SK-N-SH (cell line): ENCODE measurements at regions of chr9 and their contacts with region 1.

Region 1: DNA sequence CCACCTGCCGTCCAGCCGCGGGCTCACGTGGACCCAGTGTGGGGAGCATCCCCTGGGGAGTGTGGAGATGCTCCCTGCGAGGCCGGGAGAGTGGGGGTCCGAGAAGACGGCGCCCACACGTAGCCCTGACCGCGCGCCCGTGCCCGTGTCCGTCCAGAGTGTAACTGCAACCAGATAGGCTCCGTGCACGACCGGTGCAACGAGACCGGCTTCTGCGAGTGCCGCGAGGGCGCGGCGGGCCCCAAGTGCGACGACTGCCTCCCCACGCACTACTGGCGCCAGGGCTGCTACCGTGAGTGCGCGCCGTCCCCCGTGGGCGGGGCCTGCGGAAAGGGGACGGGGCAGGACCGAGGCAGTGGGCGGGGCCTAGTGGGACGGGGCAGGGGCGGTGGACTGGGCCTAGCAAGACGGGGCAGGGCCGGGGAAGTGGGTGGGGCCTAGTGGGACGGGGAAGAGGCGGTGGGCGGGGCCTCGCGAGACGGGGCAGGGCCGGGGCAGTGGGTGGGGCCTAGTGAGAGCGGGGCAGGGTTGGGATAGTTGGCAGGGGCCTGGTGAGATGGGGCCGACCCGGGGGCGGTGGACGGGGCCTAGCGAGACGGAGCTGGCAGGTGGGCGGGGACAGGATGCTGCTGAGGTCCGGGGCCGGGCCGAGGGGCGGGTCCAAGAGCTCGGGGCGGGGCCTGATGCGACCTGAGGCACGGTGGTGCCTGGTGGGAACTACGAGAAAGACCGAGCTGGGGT is 79.1 kb downstream of the NTNG2 start:
- DNase-seq: peak; percentile 99
- H3K4me3 ChIP-seq: peak overlapping the region; percentile 55 to 64
- H3K27ac ChIP-seq: peak overlapping the region in 1 of 2 experiments; percentile 65; a peak in 2 of 4 replicates
- H3K4me1 ChIP-seq: peaks cover 0 to 28% of the 10 kb centered on the region in 2 experiments; a peak in 1 of 4 replicates
- H3K27me3 ChIP-seq: no peaks in the 10 kb centered on the region
- CTCF ChIP-seq: no peak
- EP300 ChIP-seq: no peak
- RAD21 ChIP-seq: no peak

Region 2: GRCh38 chr9:131762356-131762932 is 478.5 kb before region 1 on chr9:
- CTCF ChIA-PET with region 1: interaction called, 131 read pairs
- POLR2A ChIA-PET with region 1: no interaction called
- DNase-seq: peak; percentile 97
- H3K4me3 ChIP-seq: peak overlapping the region in 1 of 2 experiments; percentile 46; a peak in 1 of 4 replicates
- H3K27ac ChIP-seq: no peak overlapping the region
- H3K4me1 ChIP-seq: peaks cover 0 to 3% of the 10 kb centered on the region in 2 experiments; a peak in 1 of 4 replicates
- H3K27me3 ChIP-seq: peaks cover 8% of the 10 kb centered on the region
- CTCF ChIP-seq: peak; percentile 79
- EP300 ChIP-seq: no peak
- RAD21 ChIP-seq: peak; percentile 97

Region 3: DNA sequence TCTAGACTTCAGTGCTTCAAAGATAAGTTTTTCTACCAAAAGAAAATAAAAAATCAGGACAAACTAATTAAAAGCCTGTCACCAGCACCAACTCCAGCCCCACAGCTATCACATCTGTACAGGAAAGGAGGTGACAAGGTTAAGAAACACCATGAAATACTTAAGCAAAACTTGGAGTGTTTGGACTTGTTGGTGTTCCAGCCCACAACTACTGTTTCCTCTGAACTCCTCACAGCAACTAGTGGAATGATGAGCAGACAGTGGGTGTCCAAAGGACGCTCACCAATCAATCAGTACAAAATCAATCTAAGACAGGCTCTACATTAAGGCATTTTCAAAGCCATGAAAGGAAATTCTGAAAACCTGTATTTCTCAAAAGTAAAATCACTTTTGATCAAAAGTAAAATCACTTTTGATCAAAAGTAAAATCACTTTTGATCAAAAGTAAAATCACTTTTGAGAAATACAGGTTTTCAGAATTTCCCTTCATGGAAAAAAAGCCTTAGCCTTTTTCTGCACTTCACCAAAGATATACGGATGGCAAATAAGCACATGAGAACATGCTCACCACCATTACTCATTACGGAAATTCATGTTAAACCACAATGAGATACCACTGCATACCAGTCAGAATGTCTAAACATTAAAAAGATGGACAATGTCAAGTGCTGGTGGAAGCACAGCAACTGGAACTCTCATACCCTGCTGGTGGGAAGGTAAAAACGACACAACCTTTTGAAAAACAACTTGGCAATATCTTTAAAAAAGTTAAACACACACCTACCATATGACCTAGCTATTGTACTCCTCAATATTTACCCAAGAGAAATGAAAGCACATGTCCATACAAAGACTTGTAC is 241.0 kb before region 1 on chr9:
- CTCF ChIA-PET with region 1: interaction called, 29 read pairs
- POLR2A ChIA-PET with region 1: no interaction called
- DNase-seq: no peak
- H3K4me3 ChIP-seq: no peak overlapping the region
- H3K27ac ChIP-seq: 0 out of 4 replicates have a peak overlapping the region, but pooled peaks of 1 of the 2 experiments have one; percentile 5
- H3K4me1 ChIP-seq: peaks cover 7 to 57% of the 10 kb centered on the region in 2 experiments
- H3K27me3 ChIP-seq: no peaks in the 10 kb centered on the region
- CTCF ChIP-seq: peak; percentile 22; the same call in 1 of the 2 replicates
- EP300 ChIP-seq: no peak
- RAD21 ChIP-seq: no peak

Region 4: DNA sequence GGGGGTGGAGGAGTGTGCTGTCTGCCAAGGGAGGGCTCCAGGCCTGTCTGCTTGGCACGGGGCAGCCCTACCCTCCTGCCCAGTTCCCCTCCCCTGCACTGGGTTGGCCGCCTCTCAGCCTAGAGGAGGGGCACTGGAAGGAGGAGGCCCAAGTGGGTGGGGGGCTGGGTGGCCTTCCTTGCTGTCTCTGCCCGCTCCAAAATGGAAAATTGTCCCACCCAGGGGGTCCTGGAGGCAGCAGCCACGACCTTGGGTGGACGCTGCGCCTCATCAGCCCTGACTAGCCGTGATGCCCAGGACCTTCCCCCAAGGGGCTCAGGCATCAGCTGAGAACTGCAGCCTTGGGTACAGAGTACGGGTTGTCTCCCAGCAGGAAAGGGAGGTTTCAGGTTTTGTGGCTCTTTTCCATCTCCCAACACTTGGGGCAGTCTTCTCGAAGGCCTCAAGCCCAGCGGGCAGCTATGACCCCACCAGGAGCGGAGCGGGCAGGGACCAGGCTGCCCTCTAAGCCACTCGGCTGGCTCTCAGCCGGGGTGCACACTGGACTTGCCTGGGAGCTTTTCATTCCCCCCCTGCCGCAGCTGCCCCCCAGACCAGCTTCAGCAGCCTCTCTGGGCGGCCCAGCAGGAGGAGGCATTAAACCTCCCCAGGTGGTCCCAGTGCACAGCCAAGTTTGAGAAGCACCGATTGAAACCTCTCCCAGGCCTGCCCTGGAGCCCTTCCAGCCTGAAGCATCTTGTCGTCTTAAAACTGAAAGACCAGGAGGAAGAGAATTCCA is 58.4 kb before region 1 on chr9:
- CTCF ChIA-PET with region 1: interaction called, 34 read pairs
- POLR2A ChIA-PET with region 1: interaction called, 5 read pairs
- DNase-seq: peak; percentile 84
- H3K4me3 ChIP-seq: no peak overlapping the region; a peak in 1 of 4 replicates
- H3K27ac ChIP-seq: peak overlapping the region; percentile 30 to 99; a peak in 3 of 4 replicates
- H3K4me1 ChIP-seq: peaks cover 0 to 66% of the 10 kb centered on the region in 2 experiments; a peak in 2 of 4 replicates
- H3K27me3 ChIP-seq: no peaks in the 10 kb centered on the region
- CTCF ChIP-seq: peak; percentile 34
- EP300 ChIP-seq: no peak
- RAD21 ChIP-seq: no peak; the same call in 1 of the 2 replicates

Region 5: GRCh38 chr9:132226604-132227430 is 14.1 kb before region 1 on chr9:
- CTCF ChIA-PET with region 1: interaction called, 16 read pairs
- POLR2A ChIA-PET with region 1: no interaction called
- DNase-seq: no peak
- H3K4me3 ChIP-seq: no peak overlapping the region
- H3K27ac ChIP-seq: no peak overlapping the region
- H3K4me1 ChIP-seq: peaks cover 0 to 12% of the 10 kb centered on the region in 2 experiments; a peak in 1 of 4 replicates
- H3K27me3 ChIP-seq: no peaks in the 10 kb centered on the region
- CTCF ChIP-seq: no peak
- EP300 ChIP-seq: no peak
- RAD21 ChIP-seq: no peak

Region 6: GRCh38 chr9:132372177-132373095 is 131.5 kb after region 1 on chr9:
- CTCF ChIA-PET with region 1: no interaction called
- POLR2A ChIA-PET with region 1: no interaction called
- DNase-seq: peak; percentile 58
- H3K4me3 ChIP-seq: no peak overlapping the region
- H3K27ac ChIP-seq: peak overlapping the region in 1 of 2 experiments; percentile 8; a peak in 1 of 4 replicates
- H3K4me1 ChIP-seq: peaks cover 0 to 5% of the 10 kb centered on the region in 2 experiments; a peak in 1 of 4 replicates
- H3K27me3 ChIP-seq: no peaks in the 10 kb centered on the region
- CTCF ChIP-seq: no peak
- EP300 ChIP-seq: no peak
- RAD21 ChIP-seq: no peak

Region 7: GRCh38 chr9:132923346-132923902 is 682.5 kb after region 1 on chr9:
- CTCF ChIA-PET with region 1: no interaction called
- POLR2A ChIA-PET with region 1: no interaction called
- DNase-seq: no peak
- H3K4me3 ChIP-seq: no peak overlapping the region
- H3K27ac ChIP-seq: no peak overlapping the region
- H3K4me1 ChIP-seq: no peaks in the 10 kb centered on the region
- H3K27me3 ChIP-seq: no peaks in the 10 kb centered on the region
- CTCF ChIP-seq: no peak
- EP300 ChIP-seq: no peak
- RAD21 ChIP-seq: no peak